ENCODE measurements at regions of chr12 and their contacts with region 1.

Region 1: GRCh38 chr12:112108201-112109079 is at the start of gene NAA25:
- DNase-seq: peak; percentile 86 to 87
- H3K4me3 ChIP-seq: peak within 1 kb of the TSS; percentile 63 to 69
- H3K27ac ChIP-seq: peak within 1 kb of the TSS; percentile 91 to 93
- H3K4me1 ChIP-seq: peaks cover 0 to 4% of the 10 kb centered on the region in 2 donors
- H3K27me3 ChIP-seq: no peaks in the 10 kb centered on the region
- CTCF ChIP-seq: no peak
- POLR2A ChIP-seq: peak; percentile 27 to 48
- total RNA-seq, gene NAA25: 5.3 to 57.4 (median 33.9) TPM

Region 2: GRCh38 chr12:111881716-111882115 is 226.7 kb before region 1 on chr12:
- intact Hi-C with region 1: no loop called
- DNase-seq: no peak
- H3K4me3 ChIP-seq: no peak overlapping the region
- H3K27ac ChIP-seq: no peak overlapping the region
- H3K4me1 ChIP-seq: no peaks in the 10 kb centered on the region
- H3K27me3 ChIP-seq: no peaks in the 10 kb centered on the region
- CTCF ChIP-seq: no peak
- POLR2A ChIP-seq: no peak

Region 3: DNA sequence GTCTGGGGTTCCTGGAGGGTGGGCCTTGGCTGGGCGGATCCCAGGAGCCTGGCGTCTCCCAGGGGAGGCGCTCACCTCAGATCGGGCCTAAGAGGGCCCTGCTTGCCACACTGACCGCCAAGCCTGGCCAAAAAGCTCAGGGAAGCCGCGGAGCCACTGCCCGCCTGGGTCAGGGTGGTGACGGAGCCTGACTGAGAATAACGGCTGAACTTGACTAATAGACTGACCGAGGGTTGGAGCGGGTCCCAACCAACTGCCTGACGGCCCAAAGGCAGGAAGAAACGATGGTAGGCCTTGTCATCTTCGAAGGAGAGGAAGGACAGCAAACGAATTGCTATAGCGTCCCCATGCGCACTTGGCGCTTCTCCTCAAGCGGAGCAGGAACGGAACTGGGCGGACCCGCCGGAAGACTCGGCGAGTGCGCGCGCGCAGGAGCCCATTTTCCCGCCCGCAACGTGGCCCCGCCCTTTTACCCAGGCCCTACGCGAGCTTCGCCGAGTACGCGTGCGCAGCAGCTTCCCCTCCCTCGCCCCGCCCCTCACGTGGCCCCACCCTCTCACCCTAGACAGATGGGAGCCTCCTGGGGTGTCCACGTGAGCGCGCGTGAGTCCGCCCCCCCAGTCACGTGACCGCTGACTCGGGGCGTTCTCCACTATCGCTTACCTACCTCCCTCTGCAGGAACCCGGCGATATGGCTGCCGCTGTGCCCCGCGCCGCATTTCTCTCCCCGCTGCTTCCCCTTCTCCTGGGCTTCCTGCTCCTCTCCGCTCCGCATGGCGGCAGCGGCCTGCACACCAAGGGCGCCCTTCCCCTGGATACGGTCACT is 95.5 kb before region 1 on chr12 and contains the starts of genes ERP29 and TMEM116:
- intact Hi-C with region 1: loop called (anchors 10 kb)
- DNase-seq: peak; percentile 100
- H3K4me3 ChIP-seq: peak within 1 kb of the TSS; percentile 90 to 95
- H3K27ac ChIP-seq: peak within 1 kb of the TSS; percentile 87 to 99
- H3K4me1 ChIP-seq: peaks cover 0 to 5% of the 10 kb centered on the region in 2 donors
- H3K27me3 ChIP-seq: no peaks in the 10 kb centered on the region
- CTCF ChIP-seq: peak; percentile 31 to 78 (median 70)
- POLR2A ChIP-seq: peak; percentile 90 to 96
- total RNA-seq, gene ERP29: 37.4 to 46.8 (median 42.1) TPM
- total RNA-seq, gene TMEM116: 1.2 to 21.7 (median 11.5) TPM

Region 4: GRCh38 chr12:112046003-112046402 is 62.4 kb before region 1 on chr12:
- intact Hi-C with region 1: no loop called
- DNase-seq: no peak
- H3K4me3 ChIP-seq: no peak overlapping the region
- H3K27ac ChIP-seq: no peak overlapping the region
- H3K4me1 ChIP-seq: no peaks in the 10 kb centered on the region
- H3K27me3 ChIP-seq: no peaks in the 10 kb centered on the region
- CTCF ChIP-seq: no peak
- POLR2A ChIP-seq: no peak